ENCODE measurements at regions of chr6 and their contacts with region 1.

Region 1: GRCh38 chr6:133923938-133924593 is 29.0 kb upstream of the TBPL1 start:
- DNase-seq: peak; percentile 81
- ATAC-seq: peak; percentile 98
- H3K4me3 ChIP-seq: no peak overlapping the region
- H3K27ac ChIP-seq: no peak overlapping the region
- H3K4me1 ChIP-seq: no peaks in the 10 kb centered on the region
- H3K27me3 ChIP-seq: no peaks in the 10 kb centered on the region
- CTCF ChIP-seq: peak; percentile 93
- EP300 ChIP-seq: no peak
- POLR2A ChIP-seq: no peak
- RAD21 ChIP-seq: peak; percentile 88

Region 2: GRCh38 chr6:133799043-133799442 is 125.0 kb before region 1 on chr6:
- CTCF ChIA-PET with region 1: no interaction called
- POLR2A ChIA-PET with region 1: no interaction called
- in situ Hi-C with region 1: no loop called
- intact Hi-C with region 1: no loop called
- DNase-seq: no peak
- ATAC-seq: no peak
- H3K4me3 ChIP-seq: no peak overlapping the region
- H3K27ac ChIP-seq: no peak overlapping the region
- H3K4me1 ChIP-seq: no peaks in the 10 kb centered on the region
- H3K27me3 ChIP-seq: no peaks in the 10 kb centered on the region
- CTCF ChIP-seq: no peak
- EP300 ChIP-seq: no peak
- POLR2A ChIP-seq: no peak
- RAD21 ChIP-seq: no peak

Region 3: GRCh38 chr6:133945158-133945557 is 21.1 kb after region 1 on chr6:
- CTCF ChIA-PET with region 1: no interaction called
- POLR2A ChIA-PET with region 1: no interaction called
- in situ Hi-C with region 1: no loop called
- intact Hi-C with region 1: no loop called
- DNase-seq: peak; percentile 16
- ATAC-seq: peak; percentile 88
- H3K4me3 ChIP-seq: no peak overlapping the region
- H3K27ac ChIP-seq: no peak overlapping the region
- H3K4me1 ChIP-seq: no peaks in the 10 kb centered on the region
- H3K27me3 ChIP-seq: 0 out of 5 replicates have a peak, but pooled peaks cover 0 to 2% of the 10 kb centered on the region in 2 experiments
- CTCF ChIP-seq: no peak
- EP300 ChIP-seq: no peak
- POLR2A ChIP-seq: no peak
- RAD21 ChIP-seq: no peak

Region 4: GRCh38 chr6:133957780-133958242 is 33.7 kb after region 1 on chr6:
- CTCF ChIA-PET with region 1: no interaction called
- POLR2A ChIA-PET with region 1: no interaction called
- in situ Hi-C with region 1: no loop called
- intact Hi-C with region 1: no loop called
- DNase-seq: no peak
- ATAC-seq: no peak
- H3K4me3 ChIP-seq: no peak overlapping the region
- H3K27ac ChIP-seq: no peak overlapping the region
- H3K4me1 ChIP-seq: peaks cover 16% of the 10 kb centered on the region
- H3K27me3 ChIP-seq: no peaks in the 10 kb centered on the region; a peak in 1 of 5 replicates
- CTCF ChIP-seq: no peak
- EP300 ChIP-seq: no peak
- POLR2A ChIP-seq: no peak
- RAD21 ChIP-seq: no peak

Region 5: DNA sequence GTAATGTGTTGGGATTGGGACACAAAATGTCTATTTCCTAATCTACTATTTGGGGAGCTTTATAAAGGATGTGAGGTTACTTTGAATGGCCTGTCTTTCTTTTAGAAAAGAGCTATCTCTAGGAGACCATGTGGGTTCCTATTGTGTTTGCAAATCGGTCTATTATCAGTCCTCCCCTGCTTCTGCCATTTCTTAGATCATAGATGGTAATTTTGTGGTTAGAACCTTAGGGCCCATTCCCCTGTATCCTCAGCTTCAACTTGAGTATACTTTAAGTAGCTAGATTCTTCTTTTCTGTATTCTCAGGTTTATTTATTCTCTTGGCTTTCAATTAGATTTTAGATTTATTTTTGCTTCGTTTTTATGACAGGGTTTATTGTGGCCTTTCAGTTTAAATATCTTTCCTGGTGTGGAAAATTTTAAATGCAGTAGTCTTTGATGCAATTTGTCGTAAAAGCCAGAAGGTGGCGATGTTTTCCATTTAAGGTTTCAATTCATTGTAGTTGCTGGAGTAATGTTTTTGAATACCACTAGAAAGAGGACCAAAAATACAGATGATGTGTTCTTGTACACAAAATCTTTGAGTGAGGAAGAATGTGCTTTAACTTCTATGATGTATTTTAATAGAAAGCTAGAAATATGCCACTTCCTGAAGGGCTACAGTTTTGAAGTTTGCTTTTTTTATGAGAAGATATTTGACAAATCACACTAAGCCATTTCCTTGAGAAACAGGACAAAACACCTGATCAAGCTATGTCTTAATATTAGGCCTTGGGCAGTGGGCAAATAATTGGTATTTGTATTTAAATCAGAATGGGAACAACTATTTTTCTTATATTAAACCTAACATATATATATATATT is 49.3 kb after region 1 on chr6:
- CTCF ChIA-PET with region 1: interaction called, 3 read pairs
- POLR2A ChIA-PET with region 1: no interaction called
- in situ Hi-C with region 1: no loop called
- intact Hi-C with region 1: loop called (anchors 1 kb)
- DNase-seq: peak; percentile 58
- ATAC-seq: peak; percentile 46; the same call in 2 of the 3 replicates
- H3K4me3 ChIP-seq: no peak overlapping the region
- H3K27ac ChIP-seq: no peak overlapping the region
- H3K4me1 ChIP-seq: no peaks in the 10 kb centered on the region
- H3K27me3 ChIP-seq: no peaks in the 10 kb centered on the region
- CTCF ChIP-seq: peak; percentile 71
- EP300 ChIP-seq: no peak
- POLR2A ChIP-seq: no peak
- RAD21 ChIP-seq: peak; percentile 56; the same call in 1 of the 2 replicates

Region 6: DNA sequence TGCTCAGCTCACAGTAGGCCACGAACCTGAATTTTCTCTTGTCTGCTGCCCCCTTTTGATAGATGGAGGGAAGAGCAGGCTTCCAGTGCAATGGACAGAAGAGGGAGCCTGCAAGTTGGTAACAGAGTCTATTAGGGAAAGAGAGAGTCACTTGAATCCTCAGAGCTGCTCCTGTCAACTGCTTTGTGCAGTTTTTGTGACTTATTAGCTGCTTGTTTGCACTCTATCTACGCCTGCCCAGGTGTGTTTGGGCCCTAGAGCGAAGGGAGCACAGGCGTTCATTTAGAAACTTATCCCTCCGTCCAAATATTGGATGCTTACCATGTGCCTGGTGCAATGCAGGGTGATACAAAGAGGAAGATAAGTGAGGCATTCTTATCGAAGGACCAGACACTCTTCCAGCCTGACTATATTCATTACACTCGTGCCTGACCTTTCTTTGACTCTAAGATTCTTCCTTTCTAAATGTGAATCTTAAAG is 139.9 kb after region 1 on chr6:
- CTCF ChIA-PET with region 1: interaction called, 32 read pairs
- POLR2A ChIA-PET with region 1: no interaction called
- in situ Hi-C with region 1: loop called (anchors 10 kb)
- intact Hi-C with region 1: loop called (anchors 1 kb)
- DNase-seq: peak; percentile 75
- ATAC-seq: peak; percentile 96
- H3K4me3 ChIP-seq: peak overlapping the region in 2 of 3 experiments; percentile 25 to 26; a peak in 2 of 6 replicates
- H3K27ac ChIP-seq: no peak overlapping the region
- H3K4me1 ChIP-seq: 0 out of 2 replicates have a peak, but pooled peaks cover 15% of the 10 kb centered on the region
- H3K27me3 ChIP-seq: no peaks in the 10 kb centered on the region
- CTCF ChIP-seq: peak; percentile 89
- EP300 ChIP-seq: no peak
- POLR2A ChIP-seq: no peak
- RAD21 ChIP-seq: peak; percentile 65

Measured in HepG2 (cell line).